Aorta (tissue), 5 donors: ENCODE measurements at regions of chr6 and their contacts with region 1.

Region 1: GRCh38 chr6:126033696-126034095 is 47.4 kb downstream of the TRMT11 start:
- DNase-seq: no peak
- ATAC-seq: peak; percentile 89
- H3K4me3 ChIP-seq: no peak overlapping the region
- H3K27ac ChIP-seq: no peak overlapping the region
- H3K4me1 ChIP-seq: no peaks in the 10 kb centered on the region
- H3K27me3 ChIP-seq: no peaks in the 10 kb centered on the region

Region 2: DNA sequence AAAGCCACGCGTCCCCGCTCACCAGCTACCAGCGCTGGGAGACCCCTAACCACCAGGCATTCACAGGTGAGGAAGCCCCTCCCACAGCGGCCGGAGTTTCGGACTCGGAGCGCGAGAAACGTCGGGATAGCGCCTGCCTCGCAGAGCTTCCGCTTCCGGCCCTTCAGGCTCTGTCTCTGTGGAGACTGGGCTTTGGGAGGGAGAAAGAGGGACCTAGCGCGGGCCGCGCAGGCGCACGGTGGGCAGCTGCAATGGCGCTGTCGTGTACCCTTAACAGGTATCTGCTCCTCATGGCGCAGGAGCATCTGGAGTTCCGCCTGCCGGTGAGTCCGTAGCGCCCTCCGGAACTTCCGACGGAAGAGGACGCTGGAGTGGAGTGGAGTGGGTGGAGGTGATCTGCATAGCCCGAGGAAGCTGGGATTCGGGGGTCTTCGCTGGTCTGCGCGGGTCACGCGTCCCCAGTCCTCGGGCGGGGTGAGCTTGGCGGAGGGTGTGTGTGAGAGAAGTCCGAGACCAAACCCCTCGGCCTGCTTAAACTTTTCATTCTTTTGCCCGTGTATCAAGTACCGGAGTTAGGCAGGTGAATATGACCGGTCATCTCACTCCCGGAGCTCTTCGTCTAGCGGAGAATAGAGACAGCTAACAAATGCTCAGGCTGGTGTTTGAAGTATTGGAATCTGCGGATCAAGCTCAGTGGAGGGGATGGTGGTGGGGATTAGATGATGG is 47.2 kb before region 1 on chr6 and contains the start of gene TRMT11:
- intact Hi-C with region 1: no loop called
- DNase-seq: peak; percentile 91 to 95
- ATAC-seq: peak; percentile 96
- H3K4me3 ChIP-seq: peak within 1 kb of the TSS; percentile 51 to 92
- H3K27ac ChIP-seq: peak within 1 kb of the TSS; percentile 2 to 18
- H3K4me1 ChIP-seq: peaks cover 4 to 5% of the 10 kb centered on the region in 2 donors
- H3K27me3 ChIP-seq: no peaks in the 10 kb centered on the region
- total RNA-seq, gene TRMT11: 30.4 to 34.3 TPM

Region 3: GRCh38 chr6:126180585-126180984 is 146.9 kb after region 1 on chr6:
- intact Hi-C with region 1: loop called in 1 of 2 experiments (anchors 10 kb)
- DNase-seq: no peak
- ATAC-seq: no peak
- H3K4me3 ChIP-seq: no peak overlapping the region
- H3K27ac ChIP-seq: no peak overlapping the region
- H3K4me1 ChIP-seq: peaks cover 2 to 11% of the 10 kb centered on the region in 2 donors
- H3K27me3 ChIP-seq: no peaks in the 10 kb centered on the region

Region 4: GRCh38 chr6:126339796-126340609 is 306.3 kb after region 1 on chr6 and contains the start of gene CENPW:
- intact Hi-C with region 1: loop called in 1 of 2 experiments (anchors 10 kb)
- DNase-seq: peak; percentile 93 to 94
- ATAC-seq: peak; percentile 80
- H3K4me3 ChIP-seq: peak within 1 kb of the TSS; percentile 64 to 90
- H3K27ac ChIP-seq: no peak within 1 kb of the TSS
- H3K4me1 ChIP-seq: no peaks in the 10 kb centered on the region
- H3K27me3 ChIP-seq: no peaks in the 10 kb centered on the region
- total RNA-seq, gene CENPW: 5.6 to 7.4 TPM